Activated T-helper 2 cell treated with anti-CD3 and anti-CD28 coated beads, Interferon-gamma antibody, Interleukin-2, Interleukin-4, amounts not matched to agents 10 μg/mL and 5 μg/mL and 100 μg/mL, durations not matched to agents 14 hours and 24 hours and 36 hours (primary cell): ENCODE measurements at regions of chr21 and their contacts with region 1.

Region 1: DNA sequence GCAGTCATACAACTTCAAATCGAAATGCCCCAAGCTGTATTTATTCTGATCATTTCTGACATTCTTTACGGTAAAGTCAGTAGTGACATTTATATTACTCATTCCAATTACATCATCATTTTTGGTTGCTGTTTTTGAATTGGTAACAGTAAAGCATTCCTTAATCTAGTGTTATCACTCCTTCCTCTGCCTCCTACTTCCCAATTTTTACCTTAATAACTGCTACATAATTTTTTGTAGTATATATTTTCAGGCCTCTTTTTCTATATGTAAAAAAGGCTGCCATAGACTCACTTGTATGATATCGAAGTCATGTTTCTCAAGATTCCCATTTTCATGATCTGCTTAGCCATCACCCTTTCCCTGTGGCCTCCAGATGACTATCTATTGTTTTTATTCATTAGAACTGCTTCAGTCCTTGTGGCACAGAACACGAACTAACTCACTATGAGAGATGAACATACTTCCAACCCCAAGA is 167.2 kb downstream of the RUNX1 start:
- DNase-seq: no peak
- H3K4me3 Mint-ChIP-seq: peak overlapping the region; percentile 98
- H3K27ac Mint-ChIP-seq: peak overlapping the region; percentile 78
- H3K4me1 Mint-ChIP-seq: peaks cover 62% of the 10 kb centered on the region
- H3K27me3 Mint-ChIP-seq: no peaks in the 10 kb centered on the region

Region 2: DNA sequence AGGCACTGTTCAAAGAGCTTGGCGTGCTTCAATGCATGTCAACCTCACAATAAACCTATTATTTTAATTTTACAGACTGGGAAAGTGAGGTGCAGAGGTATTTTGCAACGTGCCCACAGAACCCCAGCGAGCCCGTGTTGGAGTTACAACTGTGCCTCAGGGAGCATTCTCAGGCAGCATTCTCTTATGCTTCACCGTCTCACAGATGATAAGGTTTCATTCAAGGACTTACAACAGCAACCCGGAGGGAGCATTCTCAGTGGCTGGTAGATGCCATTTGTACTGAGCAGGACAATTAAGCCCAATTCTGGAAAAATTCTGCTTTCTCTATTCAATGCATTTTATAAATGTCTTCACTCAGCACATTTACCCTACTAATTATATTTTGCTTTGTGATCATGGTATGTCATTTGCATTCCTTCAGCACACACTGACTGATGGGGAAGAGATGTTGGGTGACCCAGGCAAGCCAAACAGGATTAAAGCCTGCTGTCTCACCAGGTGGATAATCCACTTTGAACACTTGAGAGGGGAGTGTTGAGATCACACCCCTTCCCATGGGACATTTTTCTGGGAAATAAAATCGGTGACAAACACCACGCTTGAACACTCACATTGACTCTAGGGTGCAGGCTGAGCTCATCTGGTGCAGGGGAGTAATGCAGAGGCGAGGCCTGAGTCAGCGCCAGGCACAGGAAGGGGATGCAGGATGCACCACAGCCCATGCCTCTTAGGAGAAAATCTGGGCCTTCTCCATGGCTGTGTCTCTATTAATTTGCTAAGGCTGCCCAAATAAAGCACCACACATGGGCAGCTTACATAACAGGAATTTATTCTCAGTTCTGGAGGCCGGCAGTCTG is 99.2 kb before region 1 on chr21:
- intact Hi-C with region 1: no loop called
- DNase-seq: no peak
- H3K4me3 Mint-ChIP-seq: no peak overlapping the region
- H3K27ac Mint-ChIP-seq: no peak overlapping the region
- H3K4me1 Mint-ChIP-seq: peaks cover 8% of the 10 kb centered on the region
- H3K27me3 Mint-ChIP-seq: peaks cover 4% of the 10 kb centered on the region

Region 3: DNA sequence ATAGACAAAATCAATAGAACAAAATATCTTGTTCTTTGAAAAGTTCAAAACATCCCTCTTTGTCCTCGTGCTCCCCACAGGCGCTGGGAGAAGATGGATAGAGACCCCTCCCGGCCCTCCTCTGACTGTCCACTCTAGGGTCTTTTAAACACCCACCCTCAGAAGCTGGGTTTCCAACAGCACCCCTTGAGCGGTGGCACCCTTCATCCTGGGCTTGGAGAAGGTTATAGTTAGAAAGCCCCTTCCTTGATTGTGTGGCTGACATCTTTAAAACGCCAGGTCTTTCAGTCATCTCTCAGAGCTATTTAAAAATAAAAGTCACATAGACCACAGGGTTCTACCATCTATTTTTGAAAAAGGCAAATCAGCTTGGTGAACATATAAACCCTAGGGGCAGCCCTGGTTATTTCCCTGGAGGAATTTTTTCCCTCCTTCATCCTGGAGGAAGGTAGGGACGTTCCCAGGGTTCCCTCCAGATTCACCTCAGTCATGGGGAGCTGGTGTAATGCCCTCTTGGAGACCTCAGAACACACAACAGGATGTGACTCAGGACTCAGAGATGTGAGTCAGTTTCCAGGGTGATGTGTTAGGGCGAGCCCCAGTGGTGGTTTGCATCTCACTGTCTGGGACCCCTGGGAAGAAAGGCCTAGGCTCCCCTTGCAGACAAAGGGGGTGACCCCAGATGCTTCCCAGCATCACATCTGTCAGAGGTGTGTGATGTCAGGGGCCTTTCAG is 74.6 kb before region 1 on chr21:
- intact Hi-C with region 1: loop called (anchors 1 kb)
- DNase-seq: peak; percentile 44
- H3K4me3 Mint-ChIP-seq: no peak overlapping the region
- H3K27ac Mint-ChIP-seq: peak overlapping the region; percentile 89
- H3K4me1 Mint-ChIP-seq: peaks cover 83% of the 10 kb centered on the region
- H3K27me3 Mint-ChIP-seq: no peaks in the 10 kb centered on the region

Region 4: GRCh38 chr21:34822942-34823341 is 59.0 kb before region 1 on chr21:
- intact Hi-C with region 1: no loop called
- DNase-seq: no peak
- H3K4me3 Mint-ChIP-seq: no peak overlapping the region
- H3K27ac Mint-ChIP-seq: no peak overlapping the region
- H3K4me1 Mint-ChIP-seq: peaks cover 10% of the 10 kb centered on the region
- H3K27me3 Mint-ChIP-seq: no peaks in the 10 kb centered on the region

Region 5: DNA sequence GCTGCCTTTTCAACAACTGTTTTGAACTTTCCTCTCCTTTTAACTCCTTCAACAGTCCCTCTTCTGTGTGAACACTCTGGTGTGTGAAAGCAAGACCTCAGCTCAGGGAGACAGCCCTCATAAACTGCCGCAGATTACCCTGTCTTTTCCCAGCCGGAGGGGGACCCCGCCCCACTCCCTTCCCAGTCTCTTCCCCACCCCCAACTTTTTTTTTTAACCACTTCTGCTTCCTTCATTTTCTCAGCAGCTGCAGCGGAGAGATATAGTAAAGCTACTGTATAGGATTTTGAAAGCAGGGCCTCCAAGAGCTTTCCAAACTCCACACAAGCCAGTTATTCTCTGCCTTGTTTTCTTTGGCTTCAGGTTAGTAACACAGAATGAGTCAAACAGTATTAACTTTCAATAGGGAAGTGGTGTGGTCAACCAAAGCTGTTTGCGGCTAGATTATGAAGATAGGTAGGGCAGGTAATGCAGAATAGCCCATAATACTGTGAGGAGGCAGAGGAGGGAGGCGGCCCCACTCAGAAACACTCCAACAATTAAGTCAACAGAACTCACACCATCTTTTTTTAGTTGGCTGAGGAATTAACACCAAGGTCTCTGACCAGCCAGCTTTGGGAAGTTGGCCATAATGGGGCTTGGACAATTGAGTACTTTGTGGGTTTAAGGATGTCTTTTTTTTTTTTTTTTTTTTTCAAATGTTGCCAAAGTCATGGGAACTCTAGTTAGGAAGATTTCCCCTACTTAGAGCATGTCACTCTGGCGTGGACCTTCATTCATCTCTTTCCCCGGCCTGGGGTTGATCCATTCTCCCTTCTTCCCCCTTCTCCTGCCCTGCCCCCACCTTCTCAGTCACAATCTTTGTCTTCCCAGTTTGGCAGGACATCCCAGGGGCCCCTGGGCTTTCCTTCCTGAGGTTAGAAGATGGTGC is 36.1 kb before region 1 on chr21:
- intact Hi-C with region 1: loop called (anchors 5 kb)
- DNase-seq: peak; percentile 70
- H3K4me3 Mint-ChIP-seq: peak overlapping the region; percentile 35
- H3K27ac Mint-ChIP-seq: peak overlapping the region; percentile 47
- H3K4me1 Mint-ChIP-seq: peaks cover 43% of the 10 kb centered on the region
- H3K27me3 Mint-ChIP-seq: no peaks in the 10 kb centered on the region

Region 6: GRCh38 chr21:34974162-34974981 is 92.4 kb after region 1 on chr21:
- intact Hi-C with region 1: no loop called
- DNase-seq: peak; percentile 65
- H3K4me3 Mint-ChIP-seq: peak overlapping the region; percentile 67
- H3K27ac Mint-ChIP-seq: peak overlapping the region; percentile 86
- H3K4me1 Mint-ChIP-seq: peaks cover 77% of the 10 kb centered on the region
- H3K27me3 Mint-ChIP-seq: no peaks in the 10 kb centered on the region

Region 7: DNA sequence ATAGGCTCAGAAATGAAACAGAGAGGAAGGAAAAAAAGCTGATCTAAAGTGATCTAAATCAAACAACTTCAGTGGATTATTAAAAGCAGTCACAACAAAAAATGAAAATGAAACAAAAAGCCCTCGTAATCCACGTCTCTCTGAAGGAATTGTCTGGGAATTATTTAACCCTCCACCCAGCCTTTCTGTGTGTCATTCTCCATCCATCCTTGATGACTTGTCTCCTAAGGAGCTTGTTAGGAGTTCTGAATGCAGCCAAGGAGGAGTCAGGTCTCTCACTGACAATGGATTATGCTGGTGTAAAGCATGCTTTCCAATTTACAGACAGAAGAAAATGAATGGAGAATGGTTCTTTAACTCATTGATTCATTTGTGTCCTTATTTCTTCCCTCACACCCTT is 526.5 kb after region 1 on chr21:
- intact Hi-C with region 1: loop called (anchors 2 kb)
- DNase-seq: no peak
- H3K4me3 Mint-ChIP-seq: no peak overlapping the region
- H3K27ac Mint-ChIP-seq: no peak overlapping the region
- H3K4me1 Mint-ChIP-seq: peaks cover 3% of the 10 kb centered on the region
- H3K27me3 Mint-ChIP-seq: peaks cover 4% of the 10 kb centered on the region